H1 (cell line): ENCODE measurements at regions of chr2 and their contacts with region 1.

Region 1: GRCh38 chr2:70241338-70241737 is 7.1 kb downstream of the TIA1 start:
- DNase-seq: no peak
- H3K4me3 ChIP-seq: no peak overlapping the region
- H3K27ac ChIP-seq: no peak overlapping the region
- H3K4me1 ChIP-seq: peaks cover 0 to 9% (median 6%) of the 10 kb centered on the region in 4 experiments; a peak in 5 of 7 replicates
- H3K27me3 ChIP-seq: no peaks in the 10 kb centered on the region
- CTCF ChIP-seq: no peak
- EP300 ChIP-seq: no peak
- POLR2A ChIP-seq: no peak
- RAD21 ChIP-seq: no peak

Region 2: DNA sequence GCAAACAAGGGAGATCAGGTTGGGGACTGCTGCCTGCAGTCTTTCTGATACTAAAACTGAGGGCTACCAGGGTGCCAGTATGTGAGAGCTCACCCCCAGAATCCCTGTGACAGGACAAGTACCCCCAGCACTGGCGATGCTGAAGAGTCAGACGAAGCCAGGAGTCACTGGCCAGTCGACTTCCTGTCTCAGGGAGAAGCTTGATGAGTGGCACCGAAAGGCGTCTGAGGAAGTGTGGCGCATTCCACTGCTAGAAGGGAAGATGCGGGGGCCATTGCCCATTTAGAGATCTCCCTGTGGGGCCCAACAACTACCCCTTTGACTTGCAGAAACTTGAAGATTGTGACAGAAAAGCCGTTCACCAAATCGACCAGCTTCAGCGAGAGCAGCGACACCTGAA is 304.4 kb before region 1 on chr2:
- CTCF ChIA-PET with region 1: no interaction called
- POLR2A ChIA-PET with region 1: no interaction called
- DNase-seq: no peak
- H3K4me3 ChIP-seq: no peak overlapping the region
- H3K27ac ChIP-seq: no peak overlapping the region
- H3K4me1 ChIP-seq: peaks cover 0 to 6% (median 3%) of the 10 kb centered on the region in 4 experiments; a peak in 3 of 7 replicates
- H3K27me3 ChIP-seq: no peaks in the 10 kb centered on the region
- CTCF ChIP-seq: no peak
- EP300 ChIP-seq: no peak
- POLR2A ChIP-seq: no peak
- RAD21 ChIP-seq: no peak

Region 3: DNA sequence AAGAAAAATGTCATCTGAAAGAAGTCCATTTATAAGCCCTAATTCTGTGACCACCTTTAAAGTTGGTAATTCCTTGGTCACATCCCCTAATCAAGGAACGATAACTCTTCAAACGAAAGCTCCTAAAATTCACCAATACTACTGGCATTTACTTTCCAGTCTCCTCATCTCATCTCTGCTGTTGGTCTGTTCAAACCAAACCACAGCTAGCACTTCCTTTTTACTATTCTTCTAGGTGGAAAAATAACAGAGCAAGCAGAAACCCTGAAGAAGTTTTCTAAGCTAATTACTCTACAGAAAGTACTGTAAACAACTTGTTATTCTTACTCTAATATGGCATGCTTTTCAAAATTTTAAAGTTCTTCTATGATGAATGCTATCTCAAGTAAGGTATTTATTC is 14.6 kb before region 1 on chr2:
- CTCF ChIA-PET with region 1: interaction called, 6 read pairs
- POLR2A ChIA-PET with region 1: interaction called, 12 read pairs
- DNase-seq: no peak
- H3K4me3 ChIP-seq: no peak overlapping the region
- H3K27ac ChIP-seq: no peak overlapping the region
- H3K4me1 ChIP-seq: no peaks in the 10 kb centered on the region
- H3K27me3 ChIP-seq: peaks cover 0 to 1% (median 0%) of the 10 kb centered on the region in 4 experiments; a peak in 1 of 7 replicates
- CTCF ChIP-seq: no peak
- EP300 ChIP-seq: no peak
- POLR2A ChIP-seq: no peak
- RAD21 ChIP-seq: no peak